ENCODE measurements at regions of chr3 and their contacts with region 1.

Region 1: DNA sequence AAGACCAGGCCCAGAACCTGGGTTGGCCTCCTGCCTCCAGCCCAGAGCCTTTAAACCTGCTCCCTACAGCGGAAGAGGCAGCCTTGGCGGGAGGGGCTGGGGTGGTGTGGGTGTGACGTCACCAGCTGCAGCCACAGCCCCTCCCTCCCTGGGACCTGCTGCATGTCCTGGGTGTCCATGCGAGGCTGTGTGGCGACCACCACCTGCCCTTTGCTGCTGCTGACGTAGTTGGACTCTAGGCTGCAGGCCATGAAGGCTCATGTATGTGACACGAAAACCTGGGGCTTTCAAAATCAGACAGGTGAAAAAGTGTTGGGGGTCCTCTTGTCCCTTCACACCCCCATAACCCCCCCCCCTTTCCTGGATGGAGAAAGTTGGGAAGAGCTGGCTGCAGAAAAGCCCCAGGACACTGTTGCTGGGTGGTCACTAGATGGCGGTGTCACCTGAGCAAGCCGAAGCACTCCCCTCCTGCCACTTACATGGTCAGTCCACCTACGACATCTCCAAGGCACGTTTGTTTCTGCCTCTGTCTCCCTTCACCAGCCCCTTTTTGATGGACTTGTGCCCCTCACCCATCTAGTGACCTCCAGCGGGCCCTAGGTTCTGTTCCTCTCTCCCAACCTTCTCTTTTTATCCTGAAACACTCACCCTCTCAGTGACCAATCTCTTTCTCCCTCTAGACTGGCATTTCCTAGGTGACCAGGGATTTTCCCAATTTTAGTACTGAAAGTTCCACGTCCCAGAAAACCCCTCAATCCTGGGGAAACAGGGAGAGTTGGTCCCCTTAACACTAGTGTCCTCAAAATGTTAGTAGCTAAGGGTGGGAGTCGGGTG is 35.2 kb downstream of the SLC6A20 start:
- DNase-seq: no peak
- H3K4me3 Mint-ChIP-seq: no peak overlapping the region
- H3K27ac Mint-ChIP-seq: no peak overlapping the region
- H3K4me1 Mint-ChIP-seq: peaks cover 2% of the 10 kb centered on the region
- H3K27me3 Mint-ChIP-seq: peaks cover 21% of the 10 kb centered on the region

Region 2: DNA sequence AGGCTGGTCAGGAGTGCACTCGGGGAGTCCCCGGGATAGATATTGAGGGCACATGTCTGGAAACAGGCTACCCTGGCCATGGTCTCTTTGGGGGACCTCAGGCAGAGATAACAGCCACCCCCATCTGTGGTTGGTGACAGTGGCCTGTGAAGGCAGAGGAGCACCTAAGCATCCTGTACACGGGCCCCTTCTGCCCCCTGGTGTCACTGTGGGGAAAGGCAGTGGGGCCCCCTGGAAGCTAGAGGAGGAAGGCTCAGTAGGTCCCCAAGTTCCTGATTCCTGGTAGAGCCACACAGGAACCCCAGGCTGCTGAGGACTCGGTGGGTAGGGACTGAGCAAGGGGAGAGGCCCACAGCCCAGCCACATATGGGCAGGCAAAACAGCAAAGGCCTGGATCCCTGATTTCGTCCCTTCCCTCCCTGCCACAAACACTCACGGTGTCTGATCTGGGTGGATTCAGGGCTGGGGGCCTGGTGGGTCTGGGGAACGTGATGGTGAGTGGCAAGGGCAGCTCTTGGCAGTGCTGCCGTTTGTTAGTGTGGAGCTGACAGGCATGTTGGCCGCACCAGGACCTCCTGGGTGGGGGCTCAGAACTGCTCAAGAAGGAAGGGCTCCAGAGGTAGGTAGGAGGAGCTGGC is 168.1 kb after region 1 on chr3:
- intact Hi-C with region 1: loop called (anchors 1 kb)
- DNase-seq: peak; percentile 49
- H3K4me3 Mint-ChIP-seq: no peak overlapping the region
- H3K27ac Mint-ChIP-seq: no peak overlapping the region
- H3K4me1 Mint-ChIP-seq: no peaks in the 10 kb centered on the region
- H3K27me3 Mint-ChIP-seq: no peaks in the 10 kb centered on the region

Region 3: DNA sequence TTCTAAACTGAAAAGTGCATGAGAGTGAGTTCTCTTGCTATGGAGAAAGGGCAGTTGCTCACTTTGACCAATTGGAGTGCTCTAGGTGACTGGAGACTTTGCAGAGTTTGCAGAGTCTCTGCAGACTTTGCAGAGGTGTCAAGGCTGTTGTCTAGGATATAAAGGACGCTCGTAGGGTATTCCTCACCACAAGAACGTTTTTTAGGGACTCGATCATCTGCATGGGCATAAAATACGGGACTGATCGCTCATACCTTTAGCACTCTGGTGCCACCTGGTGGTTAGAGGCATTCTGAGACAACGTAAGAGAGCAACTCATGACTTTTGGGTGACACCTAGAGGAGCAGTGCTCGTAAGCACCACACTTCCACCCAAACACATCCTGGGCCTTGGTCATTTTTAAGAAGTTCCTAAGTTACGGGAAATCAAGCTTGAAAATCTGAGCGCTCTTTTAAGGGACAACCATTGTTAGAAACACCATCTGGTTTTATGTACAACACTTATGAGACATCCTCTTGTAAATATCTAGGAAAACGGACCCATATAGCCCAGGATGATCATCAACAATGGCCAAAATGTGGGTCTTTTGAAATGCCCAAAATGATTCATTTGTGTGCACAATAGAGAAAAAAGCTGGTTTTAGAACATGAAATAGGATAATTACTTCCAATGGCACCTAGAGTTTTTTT is 317.8 kb after region 1 on chr3:
- intact Hi-C with region 1: loop called (anchors 1 kb)
- DNase-seq: peak; percentile 79
- H3K4me3 Mint-ChIP-seq: no peak overlapping the region
- H3K27ac Mint-ChIP-seq: no peak overlapping the region
- H3K4me1 Mint-ChIP-seq: peaks cover 35% of the 10 kb centered on the region
- H3K27me3 Mint-ChIP-seq: peaks cover 40% of the 10 kb centered on the region